RWPE1 (cell line): ENCODE measurements at regions of chr16 and their contacts with region 1.

Region 1: DNA sequence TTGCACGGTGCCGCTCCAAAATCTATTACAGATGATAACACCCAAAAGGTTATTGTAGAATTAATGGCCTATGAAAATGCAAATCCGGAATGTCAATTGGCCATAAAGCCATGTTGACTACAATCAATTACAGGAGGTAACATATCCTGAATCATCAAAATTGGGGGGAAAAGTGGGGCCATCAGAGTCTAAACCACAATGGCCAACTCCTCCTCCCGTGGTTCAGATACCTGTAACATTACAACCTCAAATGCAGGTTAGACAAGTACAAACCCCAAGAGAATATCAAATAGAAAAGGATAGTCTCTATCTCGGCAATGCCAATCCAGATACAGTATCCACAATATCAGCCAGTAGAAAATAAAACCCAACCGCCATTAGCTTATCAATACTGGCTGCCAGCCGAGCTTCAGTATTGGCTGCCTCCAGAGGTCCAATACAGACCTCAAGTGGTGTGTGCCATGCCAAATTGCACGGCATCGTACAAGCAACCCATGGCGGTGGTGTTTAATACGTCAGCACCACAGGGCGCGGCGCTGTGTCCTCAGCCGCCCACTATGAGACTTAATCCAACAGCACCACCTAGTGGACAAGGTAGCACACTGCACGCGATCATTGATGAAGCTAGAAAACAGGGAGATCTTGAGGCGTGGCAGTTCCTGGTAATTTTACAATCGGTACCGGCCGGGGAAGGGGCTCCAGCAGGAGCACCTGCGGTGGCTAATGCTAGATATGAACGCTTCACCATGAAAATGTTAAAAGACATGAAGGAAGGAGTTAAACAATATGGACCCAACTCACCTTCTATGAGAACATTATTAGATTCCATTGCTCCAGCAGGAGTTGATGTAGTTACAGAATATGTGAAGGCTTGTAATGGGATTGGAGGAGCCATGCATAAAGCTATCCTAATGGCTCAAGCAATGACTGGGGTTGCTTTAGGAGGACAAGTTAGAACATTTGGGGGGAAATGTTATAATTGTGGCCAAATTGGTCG is 15.2 kb downstream of the FLYWCH1 start:
- DNase-seq: peak; percentile 69
- H3K27ac ChIP-seq: no peak overlapping the region
- CTCF ChIP-seq: peak; percentile 95

Region 2: GRCh38 chr16:2942045-2942444 is 15.1 kb after region 1 on chr16:
- CTCF ChIA-PET with region 1: interaction called, 13 read pairs
- POLR2A ChIA-PET with region 1: no interaction called
- DNase-seq: no peak
- H3K27ac ChIP-seq: no peak overlapping the region
- CTCF ChIP-seq: no peak

Region 3: DNA sequence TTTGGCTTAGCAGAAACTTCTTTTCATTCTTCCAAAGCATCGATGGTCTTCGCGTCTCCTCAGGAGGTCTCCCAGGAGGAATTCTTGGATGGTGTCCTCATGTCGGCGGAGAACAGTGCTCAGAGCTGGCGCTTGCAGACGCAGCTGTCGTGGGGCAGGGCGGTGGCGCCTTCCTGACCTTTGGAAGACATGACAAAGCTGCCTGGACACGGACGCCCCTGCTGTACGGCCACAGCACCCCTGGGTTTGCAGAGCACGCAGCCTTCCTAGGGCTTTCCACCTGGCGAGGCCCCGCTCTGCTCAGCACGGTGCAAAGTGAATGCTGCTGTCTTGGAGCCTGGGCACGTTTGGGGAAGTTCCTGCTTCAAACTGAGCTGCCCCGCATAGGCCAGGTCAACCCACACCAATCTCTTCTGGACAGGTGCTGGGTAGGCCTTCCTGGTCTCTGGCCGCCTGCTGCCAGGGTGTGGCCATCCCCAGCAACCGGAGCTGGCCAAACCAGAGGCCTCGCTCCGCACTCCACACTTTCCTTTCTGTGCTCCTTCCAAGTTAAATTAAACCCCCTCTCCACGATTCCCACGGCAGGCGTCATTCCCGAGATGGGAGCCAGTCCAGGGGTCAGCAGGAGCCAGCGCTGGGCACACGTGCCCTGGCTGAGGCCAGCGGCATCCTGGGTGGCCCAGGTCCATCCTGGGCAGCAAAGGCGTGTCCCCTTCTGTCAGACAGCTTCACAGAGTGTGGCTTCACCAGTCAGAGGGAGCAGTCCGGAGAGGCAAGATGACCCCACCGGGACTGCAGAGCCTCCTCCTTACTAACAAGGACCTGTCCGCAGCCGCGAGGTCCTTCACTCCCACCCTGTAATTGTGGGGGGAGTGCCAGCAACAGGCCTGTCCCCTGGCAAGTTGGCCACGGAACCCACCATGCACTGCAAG is 22.1 kb after region 1 on chr16:
- CTCF ChIA-PET with region 1: interaction called, 13 read pairs
- POLR2A ChIA-PET with region 1: no interaction called
- DNase-seq: no peak
- H3K27ac ChIP-seq: no peak overlapping the region; the same call in 1 of the 2 replicates
- CTCF ChIP-seq: no peak

Region 4: GRCh38 chr16:3182608-3183444 is 255.9 kb after region 1 on chr16:
- CTCF ChIA-PET with region 1: no interaction called
- POLR2A ChIA-PET with region 1: no interaction called
- DNase-seq: no peak
- H3K27ac ChIP-seq: no peak overlapping the region
- CTCF ChIP-seq: no peak